Calu3 (cell line): ENCODE measurements at regions of chr6 and their contacts with region 1.

Region 1: GRCh38 chr6:41779793-41780545 is at the start of gene FRS3:
- DNase-seq: peak; percentile 99
- H3K4me3 Mint-ChIP-seq: peak within 1 kb of the TSS; percentile 77
- H3K27ac Mint-ChIP-seq: peak within 1 kb of the TSS; percentile 60
- H3K4me1 Mint-ChIP-seq: peaks cover 35% of the 10 kb centered on the region
- H3K27me3 Mint-ChIP-seq: no peaks in the 10 kb centered on the region
- CTCF ChIP-seq: peak; percentile 90
- total RNA-seq, gene FRS3: 5.0 and 6.6 TPM in 2 replicates

Region 2: DNA sequence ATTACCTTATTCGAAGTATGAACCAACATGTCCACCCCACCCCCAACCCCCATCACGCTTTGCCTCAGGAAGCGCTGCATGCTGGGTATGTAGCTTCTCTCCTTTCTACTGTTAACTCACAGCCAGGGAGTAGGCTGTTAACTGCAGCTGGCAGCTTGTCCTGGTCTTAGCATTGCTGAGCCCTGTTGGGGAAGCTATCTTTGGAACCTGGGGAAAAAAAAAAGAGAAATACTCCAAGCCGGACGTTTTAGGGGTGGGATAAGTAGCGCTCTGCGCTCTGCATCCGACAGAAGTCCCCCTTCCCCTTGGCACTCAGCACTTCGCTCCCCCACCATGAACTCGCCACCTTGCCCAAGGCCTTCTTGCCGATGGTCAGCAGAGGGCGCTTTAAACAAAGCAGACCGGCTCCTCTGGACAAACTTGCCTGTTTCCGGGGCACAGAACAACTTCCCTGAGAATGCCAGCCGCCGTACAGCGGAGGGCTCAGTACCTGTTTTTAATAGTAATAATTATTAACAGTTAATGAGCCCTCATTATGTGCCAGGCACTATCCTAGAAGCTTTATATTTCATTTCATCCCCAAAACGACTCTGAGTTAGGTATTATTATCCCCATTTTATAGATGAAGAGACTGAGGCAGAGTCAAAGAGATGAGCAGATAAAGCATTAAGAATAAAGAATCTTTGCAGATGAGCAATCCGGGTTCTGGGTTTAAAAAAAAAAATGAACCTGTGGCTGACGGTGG is 176.9 kb before region 1 on chr6:
- CTCF ChIA-PET with region 1: interaction called, 3 read pairs
- intact Hi-C with region 1: loop called (anchors 5 kb)
- DNase-seq: peak; percentile 90
- H3K4me3 Mint-ChIP-seq: no peak overlapping the region
- H3K27ac Mint-ChIP-seq: no peak overlapping the region
- H3K4me1 Mint-ChIP-seq: peaks cover 8% of the 10 kb centered on the region
- H3K27me3 Mint-ChIP-seq: peaks cover 21% of the 10 kb centered on the region
- CTCF ChIP-seq: peak; percentile 88

Region 3: DNA sequence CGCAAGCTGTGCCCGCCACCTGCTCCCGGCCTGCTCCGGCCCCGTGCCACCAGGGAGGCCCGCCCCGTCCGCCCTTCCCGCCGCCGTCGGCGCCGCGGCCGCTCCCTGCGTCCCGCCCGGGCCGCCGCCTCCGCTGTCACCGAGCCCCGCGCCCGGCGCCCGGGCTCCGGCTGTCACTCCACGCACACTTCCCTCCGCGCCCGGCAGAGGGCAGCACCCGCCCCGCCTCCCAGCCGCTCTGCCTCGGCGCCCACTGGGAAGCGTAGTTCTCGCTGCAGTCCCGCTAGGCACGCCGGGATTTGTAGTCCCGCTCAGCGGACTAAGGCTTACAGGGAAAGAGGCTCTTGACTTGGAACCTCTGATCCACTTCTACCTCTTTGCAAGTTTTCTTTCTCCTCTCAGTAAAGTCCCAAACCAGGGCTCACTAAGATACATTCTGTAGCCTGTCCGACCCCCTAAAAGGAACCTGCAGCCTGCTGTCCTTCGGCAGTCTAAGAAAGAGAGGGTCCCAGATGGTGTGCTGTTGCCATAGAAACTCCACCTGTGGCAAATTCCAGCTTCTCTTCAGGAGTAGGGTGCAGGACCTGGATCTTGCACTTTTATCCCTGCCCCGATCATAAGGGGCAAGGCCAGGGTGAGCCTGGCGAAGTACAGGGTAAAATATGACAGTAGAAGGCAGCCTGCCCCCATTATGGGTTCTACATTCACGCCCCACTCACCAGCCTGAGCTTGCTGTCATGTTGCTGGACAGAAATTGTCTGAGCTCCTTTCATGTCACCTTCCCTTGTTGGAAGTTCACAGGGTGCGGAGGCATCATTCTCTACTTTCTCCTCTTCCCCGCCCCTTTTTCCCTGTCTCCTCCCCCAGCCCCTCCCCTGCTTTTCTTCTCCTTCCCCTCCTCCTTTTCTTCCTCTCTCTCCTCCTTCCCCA is 44.3 kb before region 1 on chr6 and contains the start of gene TFEB:
- CTCF ChIA-PET with region 1: interaction called, 6 read pairs
- intact Hi-C with region 1: loop called (anchors 2 kb)
- DNase-seq: peak; percentile 98
- H3K4me3 Mint-ChIP-seq: peak within 1 kb of the TSS; percentile 76
- H3K27ac Mint-ChIP-seq: no peak within 1 kb of the TSS
- H3K4me1 Mint-ChIP-seq: peaks cover 15% of the 10 kb centered on the region
- H3K27me3 Mint-ChIP-seq: no peaks in the 10 kb centered on the region
- CTCF ChIP-seq: peak; percentile 95
- total RNA-seq, gene TFEB: 4.4 and 6.6 TPM in 2 replicates